Esophagus muscularis mucosa (tissue), 4 donors: ENCODE measurements at regions of chr4 and their contacts with region 1.

Region 1: GRCh38 chr4:109406338-109406931 is 27.2 kb upstream of the SEC24B start:
- DNase-seq: no peak
- H3K4me3 ChIP-seq: no peak overlapping the region
- H3K27ac ChIP-seq: no peak overlapping the region
- H3K4me1 ChIP-seq: no peaks in the 10 kb centered on the region
- H3K27me3 ChIP-seq: no peaks in the 10 kb centered on the region
- CTCF ChIP-seq: peak; percentile 37 to 57 (median 51)
- EP300 ChIP-seq: no peak
- POLR2A ChIP-seq: no peak

Region 2: DNA sequence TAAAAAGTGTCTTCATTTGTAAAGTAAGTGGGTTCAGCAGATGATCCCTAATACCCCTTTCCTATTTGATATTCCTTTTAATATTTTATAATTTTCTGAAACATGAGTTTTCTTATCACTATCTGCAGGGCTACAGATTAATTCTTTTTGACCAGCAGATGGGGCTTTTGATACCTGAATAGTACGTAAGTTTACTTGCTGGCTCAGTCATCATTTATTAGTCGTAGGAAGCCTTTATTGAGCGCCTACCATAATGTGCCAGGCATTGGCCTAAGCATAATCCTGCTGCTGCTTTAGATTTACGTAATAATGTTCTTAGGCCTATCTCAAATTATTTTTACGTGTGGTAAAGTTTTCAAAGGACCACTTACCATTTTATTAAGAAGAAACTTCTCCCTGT is 723.0 kb before region 1 on chr4:
- intact Hi-C with region 1: loop called (anchors 10 kb)
- DNase-seq: no peak
- H3K4me3 ChIP-seq: no peak overlapping the region
- H3K27ac ChIP-seq: no peak overlapping the region
- H3K4me1 ChIP-seq: no peaks in the 10 kb centered on the region
- H3K27me3 ChIP-seq: no peaks in the 10 kb centered on the region
- CTCF ChIP-seq: peak; percentile 9 to 33 (median 20)
- EP300 ChIP-seq: no peak
- POLR2A ChIP-seq: no peak

Region 3: GRCh38 chr4:108834835-108835384 is 571.5 kb before region 1 on chr4:
- intact Hi-C with region 1: loop called (anchors 5 kb)
- DNase-seq: no peak
- H3K4me3 ChIP-seq: no peak overlapping the region
- H3K27ac ChIP-seq: no peak overlapping the region
- H3K4me1 ChIP-seq: peaks cover 0 to 7% (median 5%) of the 10 kb centered on the region in 4 donors
- H3K27me3 ChIP-seq: peaks cover 0 to 6% (median 0%) of the 10 kb centered on the region in 4 donors
- CTCF ChIP-seq: peak in 2 of 3 experiments; percentile 51 to 54
- EP300 ChIP-seq: no peak
- POLR2A ChIP-seq: no peak